ENCODE measurements at regions of chr14 and their contacts with region 1.

Region 1: GRCh38 chr14:101964297-101965144 is at the start of gene DYNC1H1:
- DNase-seq: peak; percentile 97
- H3K4me3 ChIP-seq: peak within 1 kb of the TSS; percentile 96
- H3K27ac ChIP-seq: peak within 1 kb of the TSS; percentile 94
- H3K4me1 ChIP-seq: peaks cover 50% of the 10 kb centered on the region
- H3K27me3 ChIP-seq: no peaks in the 10 kb centered on the region
- CTCF ChIP-seq: no peak
- total RNA-seq, gene DYNC1H1: 794 and 833 TPM in 2 replicates

Region 2: GRCh38 chr14:101707068-101707842 is 257.3 kb before region 1 on chr14:
- CTCF ChIA-PET with region 1: interaction called, 4 read pairs
- POLR2A ChIA-PET with region 1: no interaction called
- intact Hi-C with region 1: loop called (anchors 5 kb)
- DNase-seq: peak; percentile 91
- H3K4me3 ChIP-seq: no peak overlapping the region
- H3K27ac ChIP-seq: no peak overlapping the region
- H3K4me1 ChIP-seq: peaks cover 6% of the 10 kb centered on the region
- H3K27me3 ChIP-seq: no peaks in the 10 kb centered on the region
- CTCF ChIP-seq: peak; percentile 81

Region 3: DNA sequence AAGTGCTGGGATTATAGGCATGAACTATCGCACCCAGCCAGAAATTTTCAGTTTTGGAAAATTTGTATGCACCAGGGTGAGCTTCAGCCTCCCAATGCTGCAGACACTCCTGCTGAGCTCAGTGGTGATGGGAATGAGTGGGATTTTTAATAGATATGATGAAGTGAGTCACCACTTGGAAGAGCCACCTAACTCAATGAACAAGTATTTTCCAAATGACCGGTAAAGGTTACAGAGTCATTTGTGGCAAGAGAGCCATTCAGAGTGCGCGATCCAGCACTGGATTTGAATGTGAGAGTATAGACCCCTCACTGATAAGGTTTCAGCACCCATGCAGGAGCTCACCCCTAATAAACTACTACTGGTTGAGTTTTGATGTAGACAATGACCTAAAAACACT is 102.3 kb before region 1 on chr14:
- CTCF ChIA-PET with region 1: no interaction called
- POLR2A ChIA-PET with region 1: no interaction called
- intact Hi-C with region 1: no loop called
- DNase-seq: no peak
- H3K4me3 ChIP-seq: no peak overlapping the region
- H3K27ac ChIP-seq: no peak overlapping the region
- H3K4me1 ChIP-seq: no peaks in the 10 kb centered on the region
- H3K27me3 ChIP-seq: no peaks in the 10 kb centered on the region
- CTCF ChIP-seq: no peak

Region 4: DNA sequence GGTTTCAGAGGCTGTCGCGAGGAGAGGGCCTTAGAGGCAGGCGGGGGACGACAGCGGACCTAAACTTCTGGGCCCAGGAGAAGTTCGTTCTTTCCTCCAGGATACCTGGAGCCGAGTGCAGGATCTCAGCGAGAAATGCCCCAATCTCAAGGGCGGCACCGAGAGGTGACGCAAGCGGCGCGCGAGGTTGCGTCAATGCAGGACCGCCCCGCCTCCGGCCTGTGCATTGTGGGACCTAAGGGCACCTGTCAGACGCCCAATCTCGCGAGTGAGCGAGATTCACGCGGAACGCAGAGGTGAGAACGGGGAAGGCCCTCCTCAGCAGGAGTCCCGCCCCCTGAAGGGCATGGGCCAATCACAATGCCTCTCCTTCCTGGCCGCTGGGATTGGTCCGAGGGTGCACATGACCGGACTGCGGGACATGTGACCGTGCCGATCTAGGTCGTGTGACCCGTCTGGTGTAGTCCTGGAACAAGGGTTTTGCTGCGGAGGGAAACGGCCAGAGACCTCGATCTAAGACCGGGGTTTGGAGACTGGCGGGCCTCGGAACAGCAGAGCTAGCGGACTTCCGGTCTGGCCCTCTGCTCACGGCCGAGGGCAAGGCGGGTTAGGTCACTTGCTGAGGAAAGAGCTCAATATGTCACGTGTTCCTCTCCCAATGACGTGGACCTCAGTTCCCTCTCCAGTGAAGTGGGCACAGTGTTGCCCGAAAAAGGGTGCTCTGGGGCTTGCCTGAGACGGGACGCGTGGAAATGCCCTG is 16.4 kb before region 1 on chr14:
- CTCF ChIA-PET with region 1: no interaction called
- POLR2A ChIA-PET with region 1: interaction called, 18 read pairs
- intact Hi-C with region 1: no loop called
- DNase-seq: peak; percentile 100
- H3K4me3 ChIP-seq: peak overlapping the region; percentile 81
- H3K27ac ChIP-seq: peak overlapping the region; percentile 98
- H3K4me1 ChIP-seq: no peaks in the 10 kb centered on the region
- H3K27me3 ChIP-seq: no peaks in the 10 kb centered on the region
- CTCF ChIP-seq: no peak

Region 5: DNA sequence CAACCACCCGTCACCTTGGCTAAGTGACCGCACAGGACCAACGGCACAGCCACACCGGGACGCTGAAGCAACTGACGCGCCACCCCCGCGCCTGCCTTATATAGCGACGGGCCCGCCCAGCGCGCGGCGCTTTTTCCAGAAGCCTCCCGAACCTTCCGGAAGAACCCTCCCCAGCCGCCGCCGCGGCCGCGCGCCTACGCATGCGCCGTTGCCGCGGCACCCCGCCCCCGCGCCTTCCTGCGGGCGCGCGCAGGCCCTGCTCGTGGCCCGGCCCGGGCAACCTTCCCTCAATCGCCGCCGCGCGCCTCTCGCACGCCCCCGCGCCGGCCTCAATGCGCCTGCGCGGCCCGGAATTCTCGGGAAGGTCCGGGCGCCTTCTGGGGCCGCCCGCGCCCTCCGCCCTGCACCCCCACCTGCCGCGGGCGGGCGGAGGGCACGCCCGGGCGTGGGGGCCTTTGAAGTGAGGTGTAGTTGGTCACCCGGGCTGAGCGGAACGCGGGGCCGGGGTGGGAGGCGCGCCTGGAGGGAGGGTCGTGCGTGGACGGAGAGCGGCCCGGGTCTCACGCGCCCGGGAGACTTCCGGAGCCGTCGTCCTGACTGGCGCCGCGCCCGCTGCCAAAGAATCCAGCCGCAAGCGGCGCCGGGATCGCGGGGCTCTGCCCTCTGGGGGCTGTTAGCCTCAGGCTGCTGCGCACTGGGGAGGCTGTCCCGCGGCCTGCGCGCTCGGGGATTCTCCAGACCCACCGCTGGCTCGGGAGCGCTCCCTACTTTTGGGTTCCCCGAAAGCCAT is 122.6 kb after region 1 on chr14 and contains the start of gene HSP90AA1:
- CTCF ChIA-PET with region 1: interaction called, 10 read pairs
- POLR2A ChIA-PET with region 1: no interaction called
- intact Hi-C with region 1: loop called (anchors 2 kb)
- DNase-seq: peak; percentile 97
- H3K4me3 ChIP-seq: peak within 1 kb of the TSS; percentile 77
- H3K27ac ChIP-seq: peak within 1 kb of the TSS; percentile 99
- H3K4me1 ChIP-seq: peaks cover 36% of the 10 kb centered on the region
- H3K27me3 ChIP-seq: no peaks in the 10 kb centered on the region
- CTCF ChIP-seq: 0 out of 2 replicates have a peak, but pooled peaks have one; percentile 33
- total RNA-seq, gene HSP90AA1: 1,040 and 1,112 TPM in 2 replicates

Region 6: GRCh38 chr14:102408724-102409123 is 444.2 kb after region 1 on chr14:
- CTCF ChIA-PET with region 1: no interaction called
- POLR2A ChIA-PET with region 1: interaction called, 14 read pairs
- intact Hi-C with region 1: no loop called
- DNase-seq: no peak
- H3K4me3 ChIP-seq: no peak overlapping the region
- H3K27ac ChIP-seq: no peak overlapping the region
- H3K4me1 ChIP-seq: no peaks in the 10 kb centered on the region
- H3K27me3 ChIP-seq: no peaks in the 10 kb centered on the region
- CTCF ChIP-seq: no peak

Measured in A673 (cell line).